ENCODE measurements at regions of chrX and their contacts with region 1.

Region 1: GRCh38 chrX:40468033-40468846 is 112.5 kb upstream of the ATP6AP2 start:
- DNase-seq: peak; percentile 48 to 54 (median 51)
- ATAC-seq: peak; percentile 91
- H3K4me3 ChIP-seq: no peak overlapping the region
- H3K27ac ChIP-seq: no peak overlapping the region
- H3K4me1 ChIP-seq: peaks cover 0 to 3% of the 10 kb centered on the region in 2 experiments; a peak in 1 of 5 replicates
- H3K27me3 ChIP-seq: no peaks in the 10 kb centered on the region
- CTCF ChIP-seq: peak; percentile 52 to 60 (median 59); a peak in 5 of 6 replicates
- EP300 ChIP-seq: no peak
- POLR2A ChIP-seq: no peak
- RAD21 ChIP-seq: peak; percentile 79 to 81

Region 2: GRCh38 chrX:40300286-40300925 is 167.8 kb before region 1 on chrX:
- CTCF ChIA-PET with region 1: no interaction called
- POLR2A ChIA-PET with region 1: no interaction called
- in situ Hi-C with region 1: no loop called
- intact Hi-C with region 1: no loop called
- DNase-seq: no peak
- ATAC-seq: no peak
- H3K4me3 ChIP-seq: no peak overlapping the region
- H3K27ac ChIP-seq: no peak overlapping the region
- H3K4me1 ChIP-seq: peaks cover 7 to 10% of the 10 kb centered on the region in 2 experiments; a peak in 3 of 5 replicates
- H3K27me3 ChIP-seq: no peaks in the 10 kb centered on the region; a peak in 2 of 5 replicates
- CTCF ChIP-seq: no peak
- EP300 ChIP-seq: no peak
- POLR2A ChIP-seq: no peak
- RAD21 ChIP-seq: no peak

Region 3: GRCh38 chrX:40314070-40314469 is 154.2 kb before region 1 on chrX:
- CTCF ChIA-PET with region 1: no interaction called
- POLR2A ChIA-PET with region 1: no interaction called
- in situ Hi-C with region 1: no loop called
- intact Hi-C with region 1: loop called (anchors 1 kb)
- DNase-seq: peak in 2 of 4 experiments; percentile 23 to 30
- ATAC-seq: peak; percentile 80
- H3K4me3 ChIP-seq: no peak overlapping the region
- H3K27ac ChIP-seq: no peak overlapping the region
- H3K4me1 ChIP-seq: peaks cover 2 to 5% of the 10 kb centered on the region in 2 experiments; a peak in 4 of 5 replicates
- H3K27me3 ChIP-seq: peaks cover 0 to 6% of the 10 kb centered on the region in 2 experiments; a peak in 2 of 5 replicates
- CTCF ChIP-seq: peak; percentile 49 to 56 (median 51)
- EP300 ChIP-seq: no peak
- POLR2A ChIP-seq: no peak
- RAD21 ChIP-seq: peak in 1 of 2 experiments; percentile 49; a peak in 2 of 4 replicates

Region 4: GRCh38 chrX:40411340-40412111 is 56.7 kb before region 1 on chrX:
- CTCF ChIA-PET with region 1: no interaction called
- POLR2A ChIA-PET with region 1: no interaction called
- in situ Hi-C with region 1: no loop called
- intact Hi-C with region 1: loop called (anchors 2 kb)
- DNase-seq: peak; percentile 42 to 60 (median 54)
- ATAC-seq: peak; percentile 98
- H3K4me3 ChIP-seq: no peak overlapping the region
- H3K27ac ChIP-seq: no peak overlapping the region
- H3K4me1 ChIP-seq: peaks cover 0 to 12% of the 10 kb centered on the region in 2 experiments; a peak in 2 of 5 replicates
- H3K27me3 ChIP-seq: no peaks in the 10 kb centered on the region
- CTCF ChIP-seq: peak; percentile 72 to 97 (median 77)
- EP300 ChIP-seq: no peak
- POLR2A ChIP-seq: no peak
- RAD21 ChIP-seq: peak; percentile 26 to 51; a peak in 3 of 4 replicates